GM12878 (cell line): ENCODE measurements at regions of chr7 and their contacts with region 1.

Region 1: GRCh38 chr7:146090023-146090645 is 26.5 kb upstream of the CNTNAP2 start:
- DNase-seq: no peak
- ATAC-seq: peak; percentile 84
- H3K4me3 ChIP-seq: no peak overlapping the region
- H3K27ac ChIP-seq: no peak overlapping the region
- H3K4me1 ChIP-seq: no peaks in the 10 kb centered on the region
- H3K27me3 ChIP-seq: no peaks in the 10 kb centered on the region
- CTCF ChIP-seq: peak; percentile 62 to 68 (median 67); a peak in 5 of 6 replicates
- EP300 ChIP-seq: no peak
- POLR2A ChIP-seq: no peak
- RAD21 ChIP-seq: peak; percentile 72

Region 2: DNA sequence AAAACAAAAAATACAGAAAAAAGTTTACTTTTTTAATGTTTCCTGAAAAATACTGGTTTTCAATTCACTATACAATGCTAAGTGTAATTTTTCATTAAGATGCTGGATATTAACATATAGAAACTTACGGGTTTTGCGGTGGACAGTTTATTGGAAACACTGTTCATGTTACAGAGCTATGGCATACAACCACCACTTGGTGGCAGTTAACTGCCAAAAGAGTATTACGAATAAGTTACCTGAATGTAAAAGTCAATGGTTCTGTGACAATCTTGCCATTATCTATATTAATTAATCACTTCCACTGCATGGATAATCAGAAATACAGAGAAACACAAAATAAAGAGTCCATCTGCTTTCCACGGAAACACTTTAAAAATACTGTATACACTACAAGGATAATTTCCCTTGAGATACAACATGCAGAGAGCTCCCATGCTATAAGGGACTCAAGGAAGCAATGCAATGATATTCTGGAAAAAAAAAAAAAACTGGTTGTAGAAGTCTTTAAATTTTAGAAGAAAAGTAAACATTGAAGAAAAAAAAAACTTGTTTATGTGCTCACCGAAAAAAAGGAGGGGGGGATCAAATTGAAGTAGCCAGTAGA is 1351.3 kb before region 1 on chr7:
- CTCF ChIA-PET with region 1: interaction called, 4 read pairs
- POLR2A ChIA-PET with region 1: no interaction called
- RAD21 ChIA-PET with region 1: no interaction called
- SMC1A ChIA-PET with region 1: no interaction called
- in situ Hi-C with region 1: loop called (anchors 25 kb)
- intact Hi-C with region 1: no loop called
- DNase-seq: no peak
- ATAC-seq: peak; percentile 91
- H3K4me3 ChIP-seq: no peak overlapping the region
- H3K27ac ChIP-seq: no peak overlapping the region
- H3K4me1 ChIP-seq: no peaks in the 10 kb centered on the region
- H3K27me3 ChIP-seq: no peaks in the 10 kb centered on the region
- CTCF ChIP-seq: peak; percentile 66 to 71 (median 70)
- EP300 ChIP-seq: no peak
- POLR2A ChIP-seq: no peak
- RAD21 ChIP-seq: peak; percentile 66

Region 3: DNA sequence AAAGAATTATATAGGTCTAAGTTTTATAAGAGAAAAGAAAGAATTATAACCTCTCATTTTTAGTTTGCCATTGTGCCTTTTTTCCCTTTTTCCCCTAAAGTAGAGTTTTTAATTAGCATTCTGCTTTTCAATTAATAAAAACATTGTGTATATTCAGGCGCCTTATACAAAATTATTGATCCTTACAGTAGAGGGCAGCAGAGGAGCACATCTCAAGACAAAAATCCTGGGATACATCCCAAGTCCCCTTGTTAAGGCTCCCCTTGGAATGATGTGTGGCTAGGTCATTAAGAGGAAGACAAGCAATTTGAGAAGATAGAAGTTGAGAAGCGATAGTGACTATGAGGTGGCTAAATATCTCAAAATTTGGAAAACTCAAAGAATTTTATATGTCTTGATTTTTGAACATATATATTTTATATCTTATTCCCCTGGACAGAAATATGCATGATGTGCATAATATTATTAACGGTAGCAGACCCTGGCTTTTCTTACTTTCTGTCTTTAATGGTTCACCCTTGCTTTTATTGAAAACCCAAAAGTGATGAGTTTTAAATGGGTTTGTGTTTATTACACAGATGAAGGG is 1235.2 kb before region 1 on chr7:
- CTCF ChIA-PET with region 1: interaction called, 3 read pairs
- POLR2A ChIA-PET with region 1: no interaction called
- RAD21 ChIA-PET with region 1: no interaction called
- SMC1A ChIA-PET with region 1: no interaction called
- in situ Hi-C with region 1: no loop called
- intact Hi-C with region 1: loop called (anchors 5 kb)
- DNase-seq: no peak
- ATAC-seq: no peak
- H3K4me3 ChIP-seq: no peak overlapping the region
- H3K27ac ChIP-seq: no peak overlapping the region
- H3K4me1 ChIP-seq: no peaks in the 10 kb centered on the region
- H3K27me3 ChIP-seq: no peaks in the 10 kb centered on the region
- CTCF ChIP-seq: peak; percentile 35 to 42 (median 39); a peak in 5 of 6 replicates
- EP300 ChIP-seq: no peak
- POLR2A ChIP-seq: no peak
- RAD21 ChIP-seq: peak; percentile 56

Region 4: DNA sequence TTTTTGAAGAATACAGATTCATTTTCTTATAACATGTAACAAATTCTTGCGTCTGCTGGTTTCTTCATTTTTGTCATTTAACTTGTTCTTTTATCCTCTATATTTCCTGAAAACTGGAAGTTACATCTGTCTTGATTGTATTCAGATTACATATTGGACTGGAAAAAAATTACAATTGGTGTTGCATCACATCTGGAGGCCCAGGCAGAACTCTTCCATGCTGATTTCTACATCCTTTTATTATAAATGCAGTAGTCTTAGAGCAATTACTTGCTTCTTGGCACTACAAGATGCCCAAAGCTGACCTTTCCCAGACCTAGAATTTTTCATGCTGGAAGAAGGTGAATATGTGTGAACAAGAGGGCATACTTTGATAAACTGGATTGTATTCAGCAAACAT is 434.5 kb before region 1 on chr7:
- CTCF ChIA-PET with region 1: no interaction called
- POLR2A ChIA-PET with region 1: no interaction called
- RAD21 ChIA-PET with region 1: no interaction called
- SMC1A ChIA-PET with region 1: no interaction called
- in situ Hi-C with region 1: no loop called
- intact Hi-C with region 1: loop called (anchors 5 kb)
- DNase-seq: no peak
- ATAC-seq: no peak
- H3K4me3 ChIP-seq: no peak overlapping the region
- H3K27ac ChIP-seq: no peak overlapping the region
- H3K4me1 ChIP-seq: no peaks in the 10 kb centered on the region
- H3K27me3 ChIP-seq: no peaks in the 10 kb centered on the region
- CTCF ChIP-seq: no peak
- EP300 ChIP-seq: no peak
- POLR2A ChIP-seq: no peak
- RAD21 ChIP-seq: no peak

Region 5: GRCh38 chr7:145957160-145957890 is 132.8 kb before region 1 on chr7:
- CTCF ChIA-PET with region 1: no interaction called
- POLR2A ChIA-PET with region 1: no interaction called
- RAD21 ChIA-PET with region 1: no interaction called
- SMC1A ChIA-PET with region 1: no interaction called
- in situ Hi-C with region 1: no loop called
- intact Hi-C with region 1: no loop called
- DNase-seq: no peak
- ATAC-seq: no peak
- H3K4me3 ChIP-seq: no peak overlapping the region
- H3K27ac ChIP-seq: no peak overlapping the region
- H3K4me1 ChIP-seq: no peaks in the 10 kb centered on the region
- H3K27me3 ChIP-seq: no peaks in the 10 kb centered on the region
- CTCF ChIP-seq: no peak
- EP300 ChIP-seq: no peak
- POLR2A ChIP-seq: no peak
- RAD21 ChIP-seq: no peak

Region 6: DNA sequence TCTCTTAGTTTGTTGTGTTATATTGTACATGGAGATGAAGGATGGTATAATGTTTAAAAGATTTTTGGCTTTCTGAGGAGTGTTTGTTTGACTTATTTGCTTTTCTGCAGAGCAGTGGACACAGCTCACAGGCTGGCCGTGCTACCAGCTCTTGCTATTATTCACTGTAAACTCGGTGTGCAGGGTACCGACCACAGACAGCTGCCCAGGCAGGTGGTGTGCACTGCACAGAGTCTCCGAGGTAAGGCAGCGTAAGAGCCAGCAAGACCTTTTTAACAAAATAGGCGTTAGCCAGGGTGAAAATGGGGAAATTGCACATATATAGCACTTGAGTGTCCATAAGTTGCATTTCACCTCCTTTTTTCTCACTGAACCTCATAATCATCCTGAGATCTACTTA is 464.4 kb after region 1 on chr7:
- CTCF ChIA-PET with region 1: no interaction called
- POLR2A ChIA-PET with region 1: no interaction called
- RAD21 ChIA-PET with region 1: no interaction called
- SMC1A ChIA-PET with region 1: no interaction called
- in situ Hi-C with region 1: no loop called
- intact Hi-C with region 1: no loop called
- DNase-seq: no peak
- ATAC-seq: no peak
- H3K4me3 ChIP-seq: no peak overlapping the region
- H3K27ac ChIP-seq: no peak overlapping the region
- H3K4me1 ChIP-seq: no peaks in the 10 kb centered on the region
- H3K27me3 ChIP-seq: no peaks in the 10 kb centered on the region
- CTCF ChIP-seq: no peak
- EP300 ChIP-seq: no peak
- POLR2A ChIP-seq: no peak
- RAD21 ChIP-seq: no peak